ENCODE measurements at regions of chr11 and their contacts with region 1.

Region 1: GRCh38 chr11:819129-819931 is 616 bp downstream of the PNPLA2 start:
- DNase-seq: peak in 1 of 2 experiments; percentile 88
- ATAC-seq: peak; percentile 40 to 66
- H3K4me3 ChIP-seq: peak overlapping the region; percentile 99
- H3K27ac ChIP-seq: peak overlapping the region; percentile 87 to 90
- H3K4me1 ChIP-seq: peaks cover 32% of the 10 kb centered on the region
- CTCF ChIP-seq: no peak
- EP300 ChIP-seq: no peak
- POLR2A ChIP-seq: peak; percentile 62
- RAD21 ChIP-seq: no peak

Region 2: DNA sequence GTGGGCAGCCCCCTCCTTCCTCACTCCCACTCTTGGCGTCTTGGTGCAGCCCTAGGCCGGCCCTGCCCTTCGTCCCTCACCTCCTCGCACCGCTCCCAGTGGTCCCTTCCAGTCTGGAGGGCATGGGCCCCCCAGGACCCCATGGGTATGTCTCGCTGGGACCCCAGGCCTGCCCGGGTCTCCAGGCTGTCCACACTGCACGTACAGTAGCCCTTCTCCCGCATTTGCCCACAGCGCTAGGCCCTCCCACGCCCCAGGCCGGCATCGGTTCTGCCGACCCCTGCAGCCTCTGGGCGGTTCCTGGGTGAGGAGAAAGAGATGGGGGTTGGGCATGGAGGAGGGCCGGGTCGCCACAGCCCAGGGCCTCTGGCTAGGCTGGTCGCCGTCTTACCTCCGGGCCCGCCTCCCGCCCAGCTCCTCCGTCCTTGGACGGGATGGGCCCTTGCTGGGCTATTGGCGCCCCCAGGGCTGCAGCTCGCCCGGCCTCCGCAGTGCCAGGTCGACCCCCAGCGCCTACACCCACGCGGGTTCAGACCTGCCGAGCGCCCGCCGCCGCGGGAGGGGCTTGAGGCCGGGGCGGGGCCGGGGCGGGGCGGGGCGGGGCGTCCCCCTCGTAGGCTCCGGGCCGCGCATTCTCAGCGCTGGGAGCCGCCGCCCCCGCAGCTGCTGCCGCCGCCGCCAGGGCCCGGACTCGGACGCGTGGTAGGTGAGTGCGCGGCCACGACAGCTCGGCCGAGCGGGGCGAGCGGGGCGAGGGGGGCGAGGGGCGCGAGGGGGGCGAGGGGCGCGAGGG is 13.2 kb after region 1 on chr11 and contains the start of gene CD151:
- CTCF ChIA-PET with region 1: interaction called, 10 read pairs
- POLR2A ChIA-PET with region 1: interaction called, 52 read pairs
- DNase-seq: peak in 1 of 2 experiments; percentile 68
- ATAC-seq: peak; percentile 8 to 26
- H3K4me3 ChIP-seq: peak within 1 kb of the TSS; percentile 86
- H3K27ac ChIP-seq: peak within 1 kb of the TSS; percentile 98 to 100
- H3K4me1 ChIP-seq: peaks cover 56% of the 10 kb centered on the region
- CTCF ChIP-seq: no peak
- EP300 ChIP-seq: no peak
- POLR2A ChIP-seq: peak; percentile 37; the same call in 1 of the 2 replicates
- RAD21 ChIP-seq: no peak
- polyA plus RNA-seq, gene CD151: 409 and 523 TPM in 2 replicates

Region 3: DNA sequence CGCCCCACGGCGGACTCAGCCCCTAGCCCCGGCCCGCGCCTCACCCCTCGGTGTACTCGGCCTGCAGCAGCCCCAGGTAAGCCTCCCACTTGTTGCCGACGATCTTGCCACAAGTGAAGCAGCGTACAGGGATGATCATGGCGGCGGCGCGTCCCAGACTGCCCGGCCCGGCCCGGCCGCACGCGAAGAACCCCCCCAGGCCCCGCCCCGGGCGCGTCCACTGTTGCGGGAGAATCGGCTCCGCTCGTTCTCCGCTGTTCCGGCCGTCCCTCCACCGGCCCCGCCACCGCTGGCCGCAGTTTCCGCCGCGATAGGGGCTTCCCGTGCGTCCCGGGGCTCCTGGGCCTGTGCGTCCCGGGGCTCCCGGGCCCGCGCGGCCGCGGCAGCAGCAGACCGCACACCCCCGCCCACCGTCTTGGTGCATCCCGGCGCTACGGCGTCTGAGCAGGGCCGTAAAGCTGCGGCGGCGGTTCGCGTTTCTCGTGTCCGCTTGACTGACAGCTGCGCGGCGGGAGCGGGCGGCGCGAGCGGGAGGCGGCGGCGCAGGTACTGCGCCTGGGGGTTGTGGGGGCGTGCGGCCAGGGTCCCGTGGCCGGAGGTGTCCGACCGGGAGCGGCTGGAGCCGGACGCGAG is 23.2 kb after region 1 on chr11 and contains the starts of genes POLR2L and TSPAN4:
- CTCF ChIA-PET with region 1: interaction called, 4 read pairs
- POLR2A ChIA-PET with region 1: interaction called, 30 read pairs
- DNase-seq: peak in 1 of 2 experiments; percentile 94
- ATAC-seq: peak; percentile 0 to 1; a peak in 1 of 6 replicates
- H3K4me3 ChIP-seq: peak within 1 kb of the TSS; percentile 100
- H3K27ac ChIP-seq: peak within 1 kb of the TSS; percentile 99
- H3K4me1 ChIP-seq: peaks cover 63% of the 10 kb centered on the region
- CTCF ChIP-seq: no peak
- EP300 ChIP-seq: peak in 1 of 2 experiments; percentile 33; a peak in 1 of 5 replicates
- POLR2A ChIP-seq: peak; percentile 98
- RAD21 ChIP-seq: no peak; a peak in 1 of 5 replicates
- polyA plus RNA-seq, gene POLR2L: 140 and 197 TPM in 2 replicates
- polyA plus RNA-seq, gene TSPAN4: 83.5 and 87.8 TPM in 2 replicates

Region 4: GRCh38 chr11:1083621-1084551 is 264.6 kb after region 1 on chr11:
- CTCF ChIA-PET with region 1: no interaction called
- POLR2A ChIA-PET with region 1: no interaction called
- DNase-seq: no peak
- ATAC-seq: no peak
- H3K4me3 ChIP-seq: no peak overlapping the region
- H3K27ac ChIP-seq: no peak overlapping the region
- H3K4me1 ChIP-seq: no peaks in the 10 kb centered on the region
- CTCF ChIP-seq: no peak
- EP300 ChIP-seq: no peak
- POLR2A ChIP-seq: no peak
- RAD21 ChIP-seq: no peak